ENCODE measurements at regions of chr21 and their contacts with region 1.

Region 1: DNA sequence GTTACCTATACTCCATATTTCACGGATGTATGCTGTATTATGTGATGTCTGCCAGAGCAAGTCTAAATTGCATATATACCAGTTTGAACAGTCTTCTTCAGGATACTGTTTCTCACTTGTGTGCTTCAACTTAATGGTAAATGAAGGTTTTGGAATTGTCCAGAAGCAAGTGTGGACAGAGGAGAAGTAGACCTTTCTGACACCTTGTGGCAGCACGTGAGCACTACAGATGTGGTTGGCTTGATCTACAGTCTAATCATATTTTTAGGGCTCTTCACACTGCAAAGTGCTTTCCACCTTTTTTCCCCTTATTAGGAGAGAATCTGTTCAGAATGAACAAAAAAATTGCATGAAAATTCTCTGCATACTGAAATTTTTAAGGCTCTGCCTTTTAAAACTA is 10.9 kb downstream of the MORC3 start:
- DNase-seq: peak; percentile 51
- ATAC-seq: peak; percentile 94
- H3K4me3 ChIP-seq: no peak overlapping the region
- H3K27ac ChIP-seq: no peak overlapping the region
- H3K4me1 ChIP-seq: peaks cover 24% of the 10 kb centered on the region
- H3K27me3 ChIP-seq: no peaks in the 10 kb centered on the region
- CTCF ChIP-seq: peak; percentile 70
- EP300 ChIP-seq: no peak
- POLR2A ChIP-seq: no peak
- RAD21 ChIP-seq: peak; percentile 47

Region 2: GRCh38 chr21:36141513-36141925 is 189.4 kb before region 1 on chr21:
- CTCF ChIA-PET with region 1: interaction called, 23 read pairs
- POLR2A ChIA-PET with region 1: no interaction called
- in situ Hi-C with region 1: no loop called
- intact Hi-C with region 1: loop called (anchors 1 kb)
- DNase-seq: peak; percentile 94
- ATAC-seq: peak; percentile 99
- H3K4me3 ChIP-seq: 0 out of 6 replicates have a peak overlapping the region, but pooled peaks of 1 of the 3 experiments have one; percentile 8
- H3K27ac ChIP-seq: no peak overlapping the region
- H3K4me1 ChIP-seq: peaks cover 13% of the 10 kb centered on the region
- H3K27me3 ChIP-seq: peaks cover 0 to 6% of the 10 kb centered on the region in 2 experiments; a peak in 2 of 5 replicates
- CTCF ChIP-seq: peak; percentile 97
- EP300 ChIP-seq: no peak
- POLR2A ChIP-seq: no peak
- RAD21 ChIP-seq: peak; percentile 91

Region 3: GRCh38 chr21:36149788-36150711 is 180.9 kb before region 1 on chr21:
- CTCF ChIA-PET with region 1: interaction called, 4 read pairs
- POLR2A ChIA-PET with region 1: no interaction called
- in situ Hi-C with region 1: loop called (anchors 5 kb)
- intact Hi-C with region 1: loop called (anchors 1 kb)
- DNase-seq: no peak
- ATAC-seq: peak; percentile 67
- H3K4me3 ChIP-seq: no peak overlapping the region
- H3K27ac ChIP-seq: peak overlapping the region; percentile 45
- H3K4me1 ChIP-seq: peaks cover 19% of the 10 kb centered on the region
- H3K27me3 ChIP-seq: no peaks in the 10 kb centered on the region
- CTCF ChIP-seq: no peak
- EP300 ChIP-seq: no peak
- POLR2A ChIP-seq: no peak
- RAD21 ChIP-seq: no peak

Region 4: DNA sequence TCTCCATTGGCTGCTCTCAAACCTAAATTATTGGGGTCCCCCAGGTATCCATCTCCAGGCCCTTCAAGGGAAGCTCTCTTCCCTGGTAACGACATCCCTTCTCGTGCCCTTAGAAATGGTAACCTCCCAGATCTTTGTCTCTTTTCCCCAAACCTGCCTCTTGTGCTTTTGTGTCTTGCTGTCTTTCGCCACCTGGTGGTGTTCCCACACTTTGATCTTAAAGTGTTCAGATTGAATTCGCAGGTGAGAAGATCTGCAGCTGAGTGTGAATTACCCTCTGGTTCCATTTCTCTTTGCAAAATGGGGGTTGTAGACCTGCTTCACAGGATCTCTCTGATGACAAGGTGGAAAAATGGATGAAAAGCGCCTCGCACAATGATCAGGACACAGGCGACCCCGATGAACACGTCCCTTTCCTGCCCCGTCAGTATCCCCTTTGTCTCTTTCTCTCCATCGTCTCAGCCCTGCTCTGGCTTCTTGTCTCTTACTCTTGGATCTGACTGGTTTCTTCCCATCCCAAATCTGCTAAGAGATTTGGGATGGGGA is 121.2 kb before region 1 on chr21:
- CTCF ChIA-PET with region 1: no interaction called
- POLR2A ChIA-PET with region 1: no interaction called
- in situ Hi-C with region 1: no loop called
- intact Hi-C with region 1: loop called (anchors 5 kb)
- DNase-seq: peak; percentile 71
- ATAC-seq: peak; percentile 70
- H3K4me3 ChIP-seq: no peak overlapping the region
- H3K27ac ChIP-seq: no peak overlapping the region
- H3K4me1 ChIP-seq: peaks cover 7% of the 10 kb centered on the region; the same call in 1 of the 2 replicates
- H3K27me3 ChIP-seq: no peaks in the 10 kb centered on the region
- CTCF ChIP-seq: peak; percentile 82
- EP300 ChIP-seq: no peak
- POLR2A ChIP-seq: no peak
- RAD21 ChIP-seq: peak; percentile 73

Region 5: GRCh38 chr21:36310016-36310415 is 20.9 kb before region 1 on chr21:
- CTCF ChIA-PET with region 1: no interaction called
- POLR2A ChIA-PET with region 1: no interaction called
- in situ Hi-C with region 1: no loop called
- intact Hi-C with region 1: no loop called
- DNase-seq: no peak
- ATAC-seq: no peak
- H3K4me3 ChIP-seq: no peak overlapping the region
- H3K27ac ChIP-seq: no peak overlapping the region
- H3K4me1 ChIP-seq: no peaks in the 10 kb centered on the region
- H3K27me3 ChIP-seq: no peaks in the 10 kb centered on the region
- CTCF ChIP-seq: no peak
- EP300 ChIP-seq: no peak
- POLR2A ChIP-seq: no peak
- RAD21 ChIP-seq: no peak

Region 6: GRCh38 chr21:36471254-36471723 is 140.4 kb after region 1 on chr21:
- CTCF ChIA-PET with region 1: no interaction called
- POLR2A ChIA-PET with region 1: no interaction called
- in situ Hi-C with region 1: no loop called
- intact Hi-C with region 1: no loop called
- DNase-seq: peak; percentile 40
- ATAC-seq: peak; percentile 71
- H3K4me3 ChIP-seq: no peak overlapping the region
- H3K27ac ChIP-seq: no peak overlapping the region
- H3K4me1 ChIP-seq: peaks cover 34% of the 10 kb centered on the region
- H3K27me3 ChIP-seq: no peaks in the 10 kb centered on the region
- CTCF ChIP-seq: no peak
- EP300 ChIP-seq: no peak
- POLR2A ChIP-seq: no peak
- RAD21 ChIP-seq: no peak

Measured in HepG2 (cell line).